Transverse colon (tissue), 4 donors: ENCODE measurements at regions of chr6 and their contacts with region 1.

Region 1: DNA sequence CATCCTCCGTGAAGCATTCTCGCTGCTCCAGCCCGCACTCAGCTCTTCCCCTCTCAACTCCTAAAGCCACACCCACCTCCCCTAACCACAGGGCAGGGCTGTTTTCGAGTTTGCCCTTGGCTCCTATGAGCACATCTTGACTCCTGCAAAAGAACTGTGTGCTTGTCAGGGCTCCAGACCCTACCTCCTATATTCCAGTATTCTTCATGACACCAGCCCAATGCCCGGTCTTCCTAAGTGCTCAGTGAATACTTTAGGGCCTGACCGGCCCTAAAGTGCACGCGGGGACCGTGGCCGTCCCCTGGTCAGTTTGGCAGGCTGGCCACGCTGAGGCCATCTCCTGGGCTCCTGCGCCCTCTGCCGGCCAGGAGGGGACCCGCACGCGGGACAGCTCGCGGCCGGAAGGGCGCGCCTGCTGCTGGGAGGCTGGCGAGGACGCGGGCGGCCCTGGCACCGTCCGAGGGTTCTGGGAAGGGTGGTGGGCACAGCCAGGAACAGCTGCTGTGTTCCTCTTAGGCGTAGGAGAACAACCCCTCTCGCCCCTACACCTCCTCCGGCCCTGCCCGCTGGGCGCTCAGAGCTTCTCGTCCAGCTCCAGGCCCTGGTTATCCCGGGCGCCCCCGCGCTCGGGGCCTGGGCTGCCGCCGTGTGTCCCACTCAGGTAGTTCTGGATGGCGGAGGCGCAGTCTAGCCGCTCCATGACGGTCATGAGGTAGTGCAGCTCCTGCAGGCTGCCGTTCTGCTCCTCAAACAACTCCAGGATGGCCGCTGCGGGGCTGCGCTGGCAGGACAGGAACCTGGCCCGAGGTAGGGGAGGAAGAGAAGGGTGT is 11.0 kb downstream of the UNC5CL start:
- DNase-seq: peak; percentile 88
- H3K4me3 ChIP-seq: peak overlapping the region; percentile 0 to 52 (median 40)
- H3K27ac ChIP-seq: peak overlapping the region; percentile 9 to 73 (median 70)
- H3K4me1 ChIP-seq: peaks cover 9 to 20% (median 12%) of the 10 kb centered on the region in 4 donors
- H3K27me3 ChIP-seq: no peaks in the 10 kb centered on the region
- CTCF ChIP-seq: peak; percentile 97 to 99 (median 99)
- EP300 ChIP-seq: no peak
- POLR2A ChIP-seq: peak; percentile 26

Region 2: GRCh38 chr6:39980839-39981580 is 1047.0 kb before region 1 on chr6:
- in situ Hi-C with region 1: loop called in 1 of 4 experiments (anchors 25 kb)
- intact Hi-C with region 1: no loop called
- DNase-seq: peak; percentile 20
- H3K4me3 ChIP-seq: no peak overlapping the region
- H3K27ac ChIP-seq: peak overlapping the region in 2 of 4 donors; percentile 27 to 52
- H3K4me1 ChIP-seq: peaks cover 0 to 38% (median 4%) of the 10 kb centered on the region in 4 donors
- H3K27me3 ChIP-seq: no peaks in the 10 kb centered on the region
- CTCF ChIP-seq: peak; percentile 47 to 78 (median 48)
- EP300 ChIP-seq: no peak
- POLR2A ChIP-seq: no peak

Region 3: DNA sequence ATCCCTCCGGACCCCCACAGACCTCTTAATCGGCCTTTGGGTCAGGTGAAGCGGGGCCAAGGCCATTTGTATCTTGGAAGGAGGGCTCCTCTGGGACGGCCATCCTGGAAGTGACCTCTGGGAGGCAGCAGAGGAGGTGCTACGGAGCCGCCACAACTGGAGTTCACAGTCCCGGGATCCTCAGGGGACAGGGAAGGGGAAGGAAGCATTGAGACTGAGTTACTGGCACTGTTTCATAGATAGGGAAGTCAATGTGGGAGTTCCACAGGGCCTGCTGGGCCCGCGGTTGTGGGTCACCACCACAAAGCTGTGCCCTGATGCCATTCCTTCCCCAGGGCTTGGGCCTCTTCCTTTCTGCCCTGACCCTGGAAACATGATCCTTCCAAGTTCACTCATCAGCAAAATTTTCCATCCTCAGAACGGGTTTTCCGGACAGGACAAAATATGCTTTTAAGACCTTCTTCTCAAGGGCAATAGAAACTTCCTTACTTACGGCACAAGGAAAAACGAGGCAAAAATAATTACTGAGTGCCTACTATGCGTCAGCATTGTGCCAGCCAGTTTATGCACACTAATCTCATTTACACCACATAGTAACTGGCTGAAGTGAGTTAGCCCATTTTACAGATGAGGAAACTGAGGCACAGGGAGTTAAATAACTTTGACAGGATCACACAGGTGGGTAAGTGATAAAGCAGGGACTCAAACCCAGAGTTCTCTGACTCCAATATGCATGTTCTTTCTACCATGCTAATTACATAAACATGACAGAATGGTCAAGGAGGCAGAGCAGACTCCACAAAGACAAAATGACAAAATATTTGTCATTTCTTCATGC is 132.8 kb before region 1 on chr6:
- in situ Hi-C with region 1: loop called in 2 of 4 experiments (anchors 10 kb)
- intact Hi-C with region 1: loop called (anchors 10 kb)
- DNase-seq: peak; percentile 42
- H3K4me3 ChIP-seq: no peak overlapping the region
- H3K27ac ChIP-seq: no peak overlapping the region
- H3K4me1 ChIP-seq: no peaks in the 10 kb centered on the region
- H3K27me3 ChIP-seq: no peaks in the 10 kb centered on the region
- CTCF ChIP-seq: peak; percentile 43 to 61 (median 52)
- EP300 ChIP-seq: no peak
- POLR2A ChIP-seq: no peak

Region 4: GRCh38 chr6:40962241-40962640 is 65.8 kb before region 1 on chr6:
- in situ Hi-C with region 1: no loop called
- intact Hi-C with region 1: no loop called
- DNase-seq: no peak
- H3K4me3 ChIP-seq: no peak overlapping the region
- H3K27ac ChIP-seq: no peak overlapping the region
- H3K4me1 ChIP-seq: no peaks in the 10 kb centered on the region
- H3K27me3 ChIP-seq: no peaks in the 10 kb centered on the region
- CTCF ChIP-seq: no peak
- EP300 ChIP-seq: no peak
- POLR2A ChIP-seq: no peak